ENCODE measurements at regions of chr9 and their contacts with region 1.

Region 1: DNA sequence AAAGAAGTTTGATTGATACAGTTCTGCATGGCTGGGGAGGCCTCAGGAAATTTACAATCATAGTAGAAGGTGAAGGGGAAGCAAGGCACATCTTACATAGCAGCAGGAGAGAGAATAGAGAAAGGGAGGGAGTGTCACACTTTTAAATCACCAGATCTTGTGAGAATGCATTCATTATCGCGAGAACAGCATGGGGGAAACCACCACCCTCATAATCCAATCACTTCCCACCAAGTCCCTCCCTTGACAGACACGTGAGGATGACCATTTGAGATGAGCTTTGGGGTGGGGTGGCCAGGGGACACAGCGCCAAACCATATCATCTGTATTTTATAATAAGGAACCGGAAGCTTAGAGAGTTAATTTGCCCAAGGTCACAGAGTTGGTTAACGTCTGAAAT is 13.7 kb upstream of the FOCAD start:
- DNase-seq: no peak
- H3K4me3 Mint-ChIP-seq: no peak overlapping the region
- H3K27ac Mint-ChIP-seq: no peak overlapping the region
- H3K4me1 Mint-ChIP-seq: no peaks in the 10 kb centered on the region
- H3K27me3 Mint-ChIP-seq: peaks cover 22% of the 10 kb centered on the region
- CTCF ChIP-seq: no peak

Region 2: GRCh38 chr9:20658677-20659473 is 11.5 kb before region 1 on chr9:
- CTCF ChIA-PET with region 1: interaction called, 13 read pairs
- POLR2A ChIA-PET with region 1: interaction called, 5 read pairs
- intact Hi-C with region 1: no loop called
- DNase-seq: peak; percentile 16
- H3K4me3 Mint-ChIP-seq: no peak overlapping the region
- H3K27ac Mint-ChIP-seq: peak overlapping the region; percentile 52
- H3K4me1 Mint-ChIP-seq: no peaks in the 10 kb centered on the region
- H3K27me3 Mint-ChIP-seq: peaks cover 30% of the 10 kb centered on the region
- CTCF ChIP-seq: no peak